Caco-2 (cell line): ENCODE measurements at regions of chr7 and their contacts with region 1.

Region 1: DNA sequence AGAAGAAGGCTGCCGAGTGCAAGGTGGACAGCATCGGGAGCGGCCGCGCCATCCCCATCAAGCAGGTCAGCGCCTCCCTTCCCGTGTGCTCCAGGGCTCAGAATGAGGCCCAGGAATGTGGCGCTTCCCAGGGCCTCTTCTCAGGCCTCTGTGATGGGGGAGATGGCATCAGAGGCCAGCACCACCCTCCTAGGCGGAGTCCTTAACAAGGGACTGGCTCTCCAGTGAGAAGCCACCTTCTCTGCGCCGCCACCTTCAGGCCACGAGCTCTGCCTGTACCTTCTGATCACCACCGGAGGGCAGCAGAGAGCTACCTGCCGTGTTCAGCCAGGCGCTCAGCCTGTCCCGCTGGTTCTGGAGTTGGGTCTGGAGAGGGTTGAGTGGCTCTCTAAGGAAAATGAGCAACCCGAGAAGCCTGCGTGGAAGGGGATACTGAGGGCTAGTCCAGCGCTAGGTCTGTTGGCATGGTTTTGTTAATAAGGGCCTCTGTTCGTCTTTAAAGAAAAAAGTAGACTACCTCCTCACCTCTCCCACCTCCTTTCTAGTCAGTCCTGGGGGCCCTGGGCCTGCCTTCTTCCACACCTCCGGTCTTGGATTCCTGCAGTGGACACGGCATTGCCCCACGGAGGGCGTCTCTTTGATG is 37.7 kb downstream of the AGAP3 start:
- DNase-seq: peak; percentile 86 to 91
- H3K4me3 ChIP-seq: no peak overlapping the region
- H3K4me3 Mint-ChIP-seq: no peak overlapping the region
- H3K27ac Mint-ChIP-seq: peak overlapping the region; percentile 3
- H3K4me1 ChIP-seq: no peaks in the 10 kb centered on the region
- H3K4me1 Mint-ChIP-seq: no peaks in the 10 kb centered on the region
- H3K27me3 ChIP-seq: no peaks in the 10 kb centered on the region
- H3K27me3 Mint-ChIP-seq: no peaks in the 10 kb centered on the region
- CTCF ChIP-seq: peak; percentile 97 to 99

Region 2: GRCh38 chr7:149440222-149440621 is 1683.7 kb before region 1 on chr7:
- CTCF ChIA-PET with region 1: interaction called, 11 read pairs
- POLR2A ChIA-PET with region 1: no interaction called
- intact Hi-C with region 1: no loop called
- DNase-seq: no peak
- H3K4me3 ChIP-seq: no peak overlapping the region
- H3K4me3 Mint-ChIP-seq: no peak overlapping the region
- H3K27ac Mint-ChIP-seq: no peak overlapping the region
- H3K4me1 ChIP-seq: no peaks in the 10 kb centered on the region
- H3K4me1 Mint-ChIP-seq: peaks cover 7% of the 10 kb centered on the region
- H3K27me3 ChIP-seq: no peaks in the 10 kb centered on the region
- H3K27me3 Mint-ChIP-seq: no peaks in the 10 kb centered on the region
- CTCF ChIP-seq: no peak

Region 3: GRCh38 chr7:151146761-151147160 is 22.8 kb after region 1 on chr7:
- CTCF ChIA-PET with region 1: interaction called, 14 read pairs
- POLR2A ChIA-PET with region 1: no interaction called
- intact Hi-C with region 1: no loop called
- DNase-seq: peak in 1 of 2 experiments; percentile 17
- H3K4me3 ChIP-seq: no peak overlapping the region
- H3K4me3 Mint-ChIP-seq: no peak overlapping the region
- H3K27ac Mint-ChIP-seq: no peak overlapping the region
- H3K4me1 ChIP-seq: no peaks in the 10 kb centered on the region
- H3K4me1 Mint-ChIP-seq: no peaks in the 10 kb centered on the region
- H3K27me3 ChIP-seq: no peaks in the 10 kb centered on the region
- H3K27me3 Mint-ChIP-seq: no peaks in the 10 kb centered on the region
- CTCF ChIP-seq: no peak

Region 4: DNA sequence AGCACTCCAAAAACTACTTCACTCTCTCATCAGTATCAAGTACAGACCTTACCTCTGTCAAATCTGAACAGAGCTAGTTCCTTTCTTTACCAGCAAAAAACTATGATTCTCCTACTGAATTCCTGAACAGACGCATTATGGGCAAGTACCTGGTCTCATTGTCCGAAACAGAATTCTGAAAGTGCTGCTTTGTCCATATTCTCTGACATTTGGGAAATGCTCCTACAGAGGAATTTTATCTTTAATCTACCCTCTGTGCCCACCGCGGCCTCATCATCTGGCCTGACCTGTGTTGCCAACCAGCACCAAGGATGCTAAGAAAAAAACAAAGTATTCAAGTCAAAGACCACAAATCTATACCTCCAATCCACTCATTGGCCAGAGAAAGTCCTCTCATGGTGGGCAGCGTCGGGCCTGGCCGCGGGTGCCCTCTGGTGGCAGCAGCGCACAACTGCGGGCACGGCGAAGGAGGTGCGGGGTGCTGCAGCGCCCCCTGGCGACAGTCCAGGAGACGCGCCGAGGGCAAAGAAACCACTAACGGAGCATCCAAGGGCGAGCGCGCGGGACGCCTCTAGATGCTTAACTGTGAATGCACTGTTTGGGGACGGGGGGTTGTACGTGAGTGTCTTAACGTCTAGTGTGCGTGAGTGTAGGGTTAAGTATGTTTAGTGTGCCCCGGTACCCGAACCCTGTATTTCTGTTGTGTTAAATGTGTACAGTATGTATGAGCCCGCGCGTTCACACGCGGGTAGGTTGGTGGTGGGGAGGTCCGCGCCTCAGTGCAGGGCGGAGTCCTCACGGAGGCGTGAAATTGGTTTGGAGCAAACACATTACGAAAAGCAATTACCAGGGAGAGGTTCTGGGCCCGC is 48.6 kb after region 1 on chr7:
- CTCF ChIA-PET with region 1: interaction called, 4 read pairs
- POLR2A ChIA-PET with region 1: no interaction called
- intact Hi-C with region 1: loop called (anchors 1 kb)
- DNase-seq: peak; percentile 63 to 84
- H3K4me3 ChIP-seq: no peak overlapping the region
- H3K4me3 Mint-ChIP-seq: no peak overlapping the region
- H3K27ac Mint-ChIP-seq: no peak overlapping the region
- H3K4me1 ChIP-seq: no peaks in the 10 kb centered on the region
- H3K4me1 Mint-ChIP-seq: peaks cover 5% of the 10 kb centered on the region
- H3K27me3 ChIP-seq: peaks cover 4% of the 10 kb centered on the region
- H3K27me3 Mint-ChIP-seq: peaks cover 33% of the 10 kb centered on the region
- CTCF ChIP-seq: peak; percentile 100

Region 5: DNA sequence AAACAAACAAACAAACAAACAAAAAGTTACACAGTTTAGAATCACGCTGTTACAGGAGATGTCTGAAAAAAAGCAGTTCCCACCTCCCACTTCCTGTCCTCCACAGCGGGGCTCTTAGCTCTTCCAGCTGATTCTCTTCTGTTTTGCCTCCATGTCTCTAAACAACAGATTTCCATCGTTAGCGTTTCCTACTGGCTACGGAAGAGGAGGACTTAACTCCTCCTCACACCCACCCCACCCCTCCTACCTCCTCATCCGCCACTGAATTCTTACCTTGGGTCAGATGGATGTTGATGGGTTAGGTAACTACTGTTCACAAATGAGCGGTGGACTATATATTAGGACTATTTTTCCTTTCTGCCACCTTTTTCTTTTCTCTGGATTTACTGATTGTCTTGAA is 180.9 kb after region 1 on chr7:
- CTCF ChIA-PET with region 1: interaction called, 7 read pairs
- POLR2A ChIA-PET with region 1: no interaction called
- intact Hi-C with region 1: loop called (anchors 1 kb)
- DNase-seq: no peak
- H3K4me3 ChIP-seq: no peak overlapping the region
- H3K4me3 Mint-ChIP-seq: peak overlapping the region; percentile 4
- H3K27ac Mint-ChIP-seq: no peak overlapping the region
- H3K4me1 ChIP-seq: no peaks in the 10 kb centered on the region
- H3K4me1 Mint-ChIP-seq: no peaks in the 10 kb centered on the region
- H3K27me3 ChIP-seq: no peaks in the 10 kb centered on the region; the same call in none of the 2 replicates
- H3K27me3 Mint-ChIP-seq: peaks cover 26% of the 10 kb centered on the region
- CTCF ChIP-seq: no peak